Ascending aorta (tissue), 2 donors: ENCODE measurements at regions of chr15 and their contacts with region 1.

Region 1: DNA sequence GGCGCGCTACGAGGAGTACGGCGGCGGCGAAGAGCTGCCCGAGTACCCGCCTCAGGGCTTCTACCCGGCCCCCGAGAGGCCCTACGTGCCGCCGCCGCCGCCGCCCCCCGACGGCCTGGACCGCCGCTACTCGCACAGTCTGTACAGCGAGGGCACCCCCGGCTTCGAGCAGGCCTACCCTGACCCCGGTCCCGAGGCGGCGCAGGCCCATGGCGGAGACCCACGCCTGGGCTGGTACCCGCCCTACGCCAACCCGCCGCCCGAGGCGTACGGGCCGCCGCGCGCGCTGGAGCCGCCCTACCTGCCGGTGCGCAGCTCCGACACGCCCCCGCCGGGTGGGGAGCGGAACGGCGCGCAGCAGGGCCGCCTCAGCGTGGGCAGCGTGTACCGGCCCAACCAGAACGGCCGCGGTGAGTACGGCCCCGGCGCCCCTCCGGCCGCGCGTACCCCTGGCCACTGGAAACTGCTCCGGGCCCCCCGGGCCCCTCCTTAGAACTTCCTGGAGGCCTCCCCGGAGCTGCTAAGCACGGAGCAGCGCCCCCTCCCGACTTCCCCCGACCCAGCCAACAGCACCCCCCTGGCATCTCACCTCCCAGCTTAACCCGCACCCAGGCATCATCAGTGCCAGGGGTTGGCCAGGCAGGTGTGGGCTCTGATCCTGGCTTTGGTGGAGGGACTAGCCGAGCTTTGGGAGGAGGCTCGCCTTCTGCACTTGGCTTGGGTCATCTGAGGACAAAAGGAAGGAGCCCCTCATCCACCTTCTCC is 1.4 kb downstream of the LOXL1 start:
- DNase-seq: peak in 1 of 2 donors; percentile 82
- H3K4me3 ChIP-seq: peak overlapping the region; percentile 65 to 88
- H3K27ac ChIP-seq: peak overlapping the region; percentile 92 to 97
- H3K4me1 ChIP-seq: peaks cover 51 to 63% of the 10 kb centered on the region in 2 donors
- H3K27me3 ChIP-seq: no peaks in the 10 kb centered on the region
- CTCF ChIP-seq: peak; percentile 43 to 62 (median 43)

Region 2: DNA sequence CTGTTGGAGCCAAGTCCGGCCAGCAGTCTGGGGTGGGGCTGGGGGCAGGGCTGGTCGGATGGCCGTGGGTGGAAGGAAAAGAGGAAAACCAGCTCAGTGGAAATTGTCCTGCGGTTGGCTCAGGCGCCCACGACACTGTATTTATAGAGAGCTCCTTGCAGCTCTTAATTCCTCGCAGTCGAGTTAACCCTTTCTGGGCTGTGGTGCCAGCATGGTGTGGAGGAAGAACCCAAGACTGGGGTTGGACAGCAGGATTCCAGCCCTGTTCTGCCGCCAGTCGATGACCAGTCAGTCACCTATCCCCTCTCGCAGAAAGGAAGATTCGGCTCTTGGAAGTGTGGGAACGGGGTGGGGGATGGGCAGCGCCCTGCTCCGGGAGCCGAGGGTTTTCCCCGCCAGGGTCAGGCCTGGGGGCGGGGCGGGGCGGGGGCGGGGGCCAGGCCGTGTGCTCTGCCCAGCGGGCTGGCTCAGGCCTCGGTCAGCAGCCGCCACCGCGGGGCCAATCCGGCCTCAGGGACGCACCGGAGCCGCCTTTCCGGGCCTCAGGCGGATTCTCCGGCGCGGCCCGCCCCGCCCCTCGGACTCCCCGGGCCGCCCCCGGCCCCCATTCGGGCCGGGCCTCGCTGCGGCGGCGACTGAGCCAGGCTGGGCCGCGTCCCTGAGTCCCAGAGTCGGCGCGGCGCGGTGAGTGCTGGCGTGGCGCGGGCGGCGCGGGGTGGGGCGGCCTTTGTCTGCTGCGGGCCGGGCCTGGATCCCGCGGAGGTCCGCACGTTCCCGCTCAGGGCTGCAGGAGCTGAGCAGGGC is 243.7 kb before region 1 on chr15 and contains the start of gene CD276:
- intact Hi-C with region 1: loop called (anchors 5 kb)
- DNase-seq: peak; percentile 46 to 90
- H3K4me3 ChIP-seq: peak within 1 kb of the TSS; percentile 57 to 98
- H3K27ac ChIP-seq: peak within 1 kb of the TSS; percentile 68 to 95
- H3K4me1 ChIP-seq: peaks cover 13 to 28% of the 10 kb centered on the region in 2 donors
- H3K27me3 ChIP-seq: no peaks in the 10 kb centered on the region
- CTCF ChIP-seq: peak in 1 of 3 experiments; percentile 45
- total RNA-seq, gene CD276: 84.3 TPM

Region 3: GRCh38 chr15:73800662-73801345 is 126.9 kb before region 1 on chr15:
- intact Hi-C with region 1: loop called (anchors 5 kb)
- DNase-seq: peak; percentile 18 to 86
- H3K4me3 ChIP-seq: no peak overlapping the region
- H3K27ac ChIP-seq: peak overlapping the region; percentile 82 to 93
- H3K4me1 ChIP-seq: peaks cover 20 to 46% of the 10 kb centered on the region in 2 donors
- H3K27me3 ChIP-seq: no peaks in the 10 kb centered on the region
- CTCF ChIP-seq: no peak

Region 4: DNA sequence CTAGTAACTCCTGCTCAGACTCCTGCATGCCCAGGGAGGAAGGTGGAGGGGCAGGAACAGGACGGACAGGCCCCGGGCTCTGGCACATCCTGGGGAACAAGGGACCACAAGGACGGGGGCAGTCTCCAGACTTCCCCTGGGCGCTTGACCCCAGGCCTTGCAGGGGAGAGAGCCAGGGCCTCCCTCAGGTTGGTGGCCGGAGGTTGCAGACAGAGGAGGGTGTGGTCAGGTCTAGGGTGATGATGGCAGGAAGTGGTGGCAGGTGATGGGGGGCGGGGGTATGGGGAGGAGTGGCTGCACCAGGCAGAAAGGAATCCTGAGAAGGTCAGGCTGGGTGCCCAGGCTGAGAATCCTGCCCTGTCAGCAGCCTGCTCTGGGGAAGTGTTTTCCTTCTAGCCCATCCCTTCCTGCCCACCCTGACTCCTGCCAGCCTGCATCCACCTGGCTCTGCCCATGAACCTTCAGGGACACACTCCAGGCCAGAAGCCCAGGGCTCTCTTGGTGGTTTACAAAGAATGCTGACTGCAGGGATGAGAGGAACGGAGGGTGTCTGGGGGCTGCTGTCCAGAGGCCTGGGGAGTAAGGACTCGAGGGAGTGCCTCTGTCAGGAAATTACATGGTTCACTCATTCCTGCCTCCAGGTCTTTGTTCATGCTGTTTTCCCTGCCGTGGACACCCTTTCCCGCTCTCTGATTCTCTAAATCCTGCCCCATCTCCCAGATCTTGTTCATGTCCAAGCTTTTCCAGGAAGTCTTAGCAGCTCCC is 14.4 kb after region 1 on chr15:
- intact Hi-C with region 1: loop called (anchors 1 kb)
- DNase-seq: peak in 1 of 2 donors; percentile 65
- H3K4me3 ChIP-seq: no peak overlapping the region
- H3K27ac ChIP-seq: peak overlapping the region; percentile 90 to 93
- H3K4me1 ChIP-seq: peaks cover 35 to 68% of the 10 kb centered on the region in 2 donors
- H3K27me3 ChIP-seq: no peaks in the 10 kb centered on the region
- CTCF ChIP-seq: no peak

Region 5: DNA sequence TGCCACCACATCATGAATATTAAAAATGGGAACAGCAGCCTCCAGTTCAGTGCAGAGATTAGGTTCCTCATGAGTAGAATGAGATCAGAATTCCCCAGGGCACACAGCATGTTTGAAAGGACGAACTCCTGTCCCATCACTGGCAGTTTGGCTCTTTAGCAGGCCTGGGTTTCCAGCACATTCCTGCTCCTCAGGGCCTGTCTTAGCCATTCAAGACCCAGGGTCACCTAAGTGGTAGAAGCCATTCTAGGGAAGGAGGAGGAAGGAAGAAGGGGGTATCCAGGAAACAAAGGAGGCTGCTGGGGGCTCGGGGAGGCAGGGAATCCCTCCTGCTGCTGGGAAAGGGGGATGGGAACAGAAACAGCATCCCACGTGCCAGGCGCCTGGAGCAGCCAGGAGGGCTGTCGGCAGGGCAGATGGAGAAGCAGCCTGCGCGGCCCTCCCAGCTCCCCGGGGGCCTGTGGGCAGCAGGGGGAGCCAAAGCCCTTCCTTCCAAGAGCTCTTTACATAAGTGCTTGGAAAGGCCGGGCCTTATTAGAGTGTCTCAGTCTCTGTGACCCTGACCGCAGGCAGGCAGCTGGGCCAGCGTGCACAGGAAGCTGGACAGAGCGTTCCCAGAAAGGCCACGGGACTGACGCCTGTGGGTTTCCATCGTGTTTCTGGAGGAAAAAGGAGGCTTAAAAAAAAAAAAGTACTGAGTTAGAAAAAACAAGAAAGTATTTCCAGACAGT is 23.3 kb after region 1 on chr15:
- intact Hi-C with region 1: loop called (anchors 1 kb)
- DNase-seq: peak; percentile 94 to 99
- H3K4me3 ChIP-seq: peak overlapping the region in 1 of 2 donors; percentile 30
- H3K27ac ChIP-seq: peak overlapping the region; percentile 99 to 100
- H3K4me1 ChIP-seq: peaks cover 9 to 35% of the 10 kb centered on the region in 2 donors
- H3K27me3 ChIP-seq: no peaks in the 10 kb centered on the region
- CTCF ChIP-seq: peak; percentile 80 to 95 (median 81)